CD4-positive, alpha-beta memory T cell (primary cell): ENCODE measurements at regions of chr7 and their contacts with region 1.

Region 1: DNA sequence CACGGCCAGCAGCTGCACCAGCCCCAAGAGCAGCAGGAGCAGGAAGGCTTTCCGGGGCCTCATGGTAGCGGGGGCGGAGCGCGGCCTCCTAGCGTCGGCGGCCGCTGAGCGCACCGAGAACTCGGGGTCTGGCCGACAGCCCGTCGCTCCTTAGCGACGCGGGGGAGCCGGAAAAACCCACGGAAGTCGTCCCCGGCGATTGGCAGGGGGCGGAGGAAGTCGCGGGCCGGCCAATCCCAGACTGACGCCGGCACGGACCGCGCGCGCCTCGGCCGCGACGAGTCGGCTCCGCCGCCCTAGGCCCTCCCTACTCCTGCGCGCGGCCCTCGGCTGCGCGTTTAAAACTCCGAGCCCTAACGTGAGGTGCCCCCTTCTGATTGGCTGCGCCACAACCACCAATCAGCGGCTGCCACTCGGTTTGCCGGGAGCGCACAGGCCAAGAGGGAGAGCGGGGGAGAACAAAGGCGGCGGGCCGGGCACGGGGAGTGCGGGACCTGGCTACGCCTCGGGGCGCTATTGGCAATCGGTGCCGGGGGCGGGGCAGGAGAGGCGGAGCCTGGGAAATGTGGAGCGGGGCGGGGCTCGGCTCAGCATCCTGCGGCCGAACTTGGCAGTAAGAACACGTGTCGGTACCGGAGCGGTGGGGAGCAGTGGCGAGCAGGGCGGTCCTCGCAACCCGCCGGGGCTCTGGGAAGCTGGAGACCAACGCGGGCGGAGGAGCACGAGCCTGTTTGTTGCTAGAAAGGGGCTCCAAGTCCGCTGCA is at the start of gene PDIA4:
- DNase-seq: peak; percentile 99
- H3K4me3 ChIP-seq: peak within 1 kb of the TSS; percentile 59 to 86
- H3K4me3 Mint-ChIP-seq: peak within 1 kb of the TSS; percentile 88 to 95 (median 92)
- H3K27ac ChIP-seq: peak within 1 kb of the TSS; percentile 88
- H3K27ac Mint-ChIP-seq: peak within 1 kb of the TSS; percentile 90 to 98 (median 94)
- H3K4me1 ChIP-seq: peaks cover 40% of the 10 kb centered on the region
- H3K4me1 Mint-ChIP-seq: peaks cover 29 to 58% (median 45%) of the 10 kb centered on the region in 4 donors
- H3K27me3 ChIP-seq: no peaks in the 10 kb centered on the region
- H3K27me3 Mint-ChIP-seq: no peaks in the 10 kb centered on the region
- total RNA-seq, gene PDIA4: 82.8 to 87.1 TPM

Region 2: GRCh38 chr7:148563583-148564274 is 464.8 kb before region 1 on chr7:
- CTCF ChIA-PET with region 1: no interaction called
- POLR2A ChIA-PET with region 1: no interaction called
- intact Hi-C with region 1: no loop called
- DNase-seq: no peak
- H3K4me3 ChIP-seq: peak overlapping the region in 1 of 2 donors; percentile 9
- H3K4me3 Mint-ChIP-seq: peak overlapping the region in 7 of 8 donors; percentile 33 to 85 (median 77)
- H3K27ac ChIP-seq: no peak overlapping the region
- H3K27ac Mint-ChIP-seq: peak overlapping the region; percentile 31 to 81 (median 54)
- H3K4me1 ChIP-seq: peaks cover 15% of the 10 kb centered on the region
- H3K4me1 Mint-ChIP-seq: peaks cover 10 to 20% (median 13%) of the 10 kb centered on the region in 4 donors
- H3K27me3 ChIP-seq: no peaks in the 10 kb centered on the region
- H3K27me3 Mint-ChIP-seq: peaks cover 7 to 8% of the 10 kb centered on the region in 2 donors

Region 3: GRCh38 chr7:148940702-148941597 is 87.6 kb before region 1 on chr7:
- CTCF ChIA-PET with region 1: no interaction called
- POLR2A ChIA-PET with region 1: interaction called, 6 read pairs
- intact Hi-C with region 1: loop called (anchors 1 kb)
- DNase-seq: peak; percentile 75 to 84 (median 80)
- H3K4me3 ChIP-seq: peak overlapping the region; percentile 54 to 75
- H3K4me3 Mint-ChIP-seq: peak overlapping the region; percentile 93 to 97 (median 96)
- H3K27ac ChIP-seq: peak overlapping the region; percentile 90
- H3K27ac Mint-ChIP-seq: peak overlapping the region; percentile 91 to 99 (median 98)
- H3K4me1 ChIP-seq: peaks cover 21% of the 10 kb centered on the region
- H3K4me1 Mint-ChIP-seq: peaks cover 6 to 25% (median 13%) of the 10 kb centered on the region in 4 donors
- H3K27me3 ChIP-seq: no peaks in the 10 kb centered on the region
- H3K27me3 Mint-ChIP-seq: no peaks in the 10 kb centered on the region

Region 4: GRCh38 chr7:149005241-149006050 is 23.1 kb before region 1 on chr7:
- CTCF ChIA-PET with region 1: interaction called, 84 read pairs
- POLR2A ChIA-PET with region 1: interaction called, 17 read pairs
- intact Hi-C with region 1: loop called (anchors 1 kb)
- DNase-seq: peak; percentile 71 to 79 (median 73)
- H3K4me3 ChIP-seq: no peak overlapping the region
- H3K4me3 Mint-ChIP-seq: no peak overlapping the region
- H3K27ac ChIP-seq: no peak overlapping the region
- H3K27ac Mint-ChIP-seq: peak overlapping the region in 5 of 7 donors; percentile 46 to 87 (median 62)
- H3K4me1 ChIP-seq: peaks cover 4% of the 10 kb centered on the region
- H3K4me1 Mint-ChIP-seq: peaks cover 3 to 4% (median 4%) of the 10 kb centered on the region in 4 donors
- H3K27me3 ChIP-seq: no peaks in the 10 kb centered on the region
- H3K27me3 Mint-ChIP-seq: no peaks in the 10 kb centered on the region

Region 5: DNA sequence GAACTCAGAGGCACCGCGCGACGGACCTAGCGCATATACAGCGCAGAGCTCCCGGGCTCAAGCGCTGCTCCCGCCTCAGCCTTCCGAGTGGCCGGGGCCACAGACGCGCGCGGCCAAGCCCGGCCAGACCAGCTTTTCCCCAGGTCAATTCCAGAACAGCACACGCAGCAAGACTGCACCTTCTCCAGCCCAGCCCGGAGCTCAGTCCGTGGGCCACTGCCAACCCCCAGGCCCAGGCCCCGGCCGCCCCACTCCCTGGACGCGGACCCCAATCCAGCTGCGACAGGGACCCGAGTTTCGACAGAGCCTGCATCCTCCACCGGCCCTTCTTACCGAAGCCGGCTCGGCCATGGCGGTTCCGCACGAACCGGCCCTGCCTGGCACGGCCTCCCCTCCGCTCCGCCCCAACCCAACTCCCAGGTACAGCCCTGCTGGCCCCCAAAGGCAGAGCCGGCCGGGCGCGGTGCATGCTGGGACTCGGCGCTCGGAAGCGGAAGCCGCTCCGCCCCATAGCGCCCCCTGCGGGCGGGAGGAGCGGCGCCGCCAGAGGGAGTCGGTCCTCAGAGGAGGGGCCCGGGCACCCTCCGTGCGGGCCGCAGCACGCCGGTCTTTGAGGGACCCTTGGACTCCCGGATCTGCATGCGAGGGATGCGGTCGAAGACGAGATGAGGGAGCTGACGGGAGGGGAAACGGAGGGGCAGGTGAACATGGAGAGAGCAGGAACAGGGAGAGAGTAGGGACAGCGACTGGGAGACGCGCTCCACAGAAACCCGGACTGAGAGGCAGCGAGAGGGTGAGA is 97.5 kb after region 1 on chr7 and contains the start of gene ZNF425:
- CTCF ChIA-PET with region 1: no interaction called
- POLR2A ChIA-PET with region 1: interaction called, 12 read pairs
- intact Hi-C with region 1: loop called (anchors 1 kb)
- DNase-seq: peak; percentile 89 to 94 (median 91)
- H3K4me3 ChIP-seq: peak within 1 kb of the TSS; percentile 83 to 96
- H3K4me3 Mint-ChIP-seq: peak within 1 kb of the TSS; percentile 91 to 100 (median 100)
- H3K27ac ChIP-seq: peak within 1 kb of the TSS; percentile 88
- H3K27ac Mint-ChIP-seq: peak within 1 kb of the TSS; percentile 91 to 99 (median 98)
- H3K4me1 ChIP-seq: peaks cover 19% of the 10 kb centered on the region
- H3K4me1 Mint-ChIP-seq: peaks cover 15 to 35% (median 25%) of the 10 kb centered on the region in 4 donors
- H3K27me3 ChIP-seq: no peaks in the 10 kb centered on the region
- H3K27me3 Mint-ChIP-seq: no peaks in the 10 kb centered on the region
- total RNA-seq, gene ZNF425: 3.2 to 4.0 TPM